Dorsolateral prefrontal cortex (tissue), 120 donors: ENCODE measurements at regions of chr20 and their contacts with region 1.

Region 1: DNA sequence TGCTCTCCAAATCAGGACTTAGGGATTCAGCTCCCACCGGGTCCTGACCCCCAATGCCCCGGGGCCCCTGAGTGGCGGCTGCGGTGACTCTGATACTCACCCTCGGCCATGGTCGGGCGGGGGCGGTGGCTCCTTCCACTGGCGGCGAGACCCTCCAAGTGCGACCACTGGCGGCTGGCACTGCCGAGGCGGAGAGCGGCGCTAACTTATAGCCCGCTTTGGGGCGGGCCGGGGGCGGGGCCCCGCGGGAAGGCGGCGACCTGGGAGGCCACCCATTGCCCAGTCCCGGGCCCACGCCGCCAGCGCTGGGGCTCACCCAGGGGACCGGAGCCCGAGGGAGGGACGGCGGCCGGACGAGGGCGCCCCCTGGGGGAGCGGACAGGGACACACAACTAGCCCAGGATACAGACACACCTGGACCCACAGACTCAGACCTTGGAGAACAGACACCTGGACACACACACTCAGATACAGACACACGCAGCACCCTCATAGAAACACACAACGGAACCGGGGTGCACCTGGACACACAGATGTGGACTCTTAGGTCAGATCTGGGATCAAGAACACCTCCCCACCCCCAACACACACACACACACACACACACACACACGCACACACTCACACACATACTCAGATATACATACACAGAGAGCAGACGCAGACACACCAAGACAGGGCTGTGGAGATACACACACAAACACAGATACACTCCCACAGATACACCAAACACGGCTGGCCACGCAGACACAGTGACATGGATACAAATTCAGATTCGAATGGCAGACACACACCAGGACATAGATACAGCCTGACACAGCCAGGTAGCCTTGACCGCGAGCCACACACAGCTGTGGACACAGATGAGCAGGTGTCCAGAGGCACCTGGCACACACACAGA is at the start of gene TGM2:
- DNase-seq: peak in 1 of 10 donors; percentile 63
- H3K4me3 ChIP-seq: peak within 1 kb of the TSS in 58 of 59 donors; percentile 16 to 65 (median 45)
- H3K27ac ChIP-seq: peak within 1 kb of the TSS in 22 of 59 donors; percentile 1 to 76 (median 30)
- H3K27me3 ChIP-seq: peaks cover 0 to 7% (median 0%) of the 10 kb centered on the region in 45 donors
- CTCF ChIP-seq: peak; percentile 43 to 87 (median 75)
- total RNA-seq, gene TGM2: 17.7 to 220 (median 53.6) TPM

Region 2: DNA sequence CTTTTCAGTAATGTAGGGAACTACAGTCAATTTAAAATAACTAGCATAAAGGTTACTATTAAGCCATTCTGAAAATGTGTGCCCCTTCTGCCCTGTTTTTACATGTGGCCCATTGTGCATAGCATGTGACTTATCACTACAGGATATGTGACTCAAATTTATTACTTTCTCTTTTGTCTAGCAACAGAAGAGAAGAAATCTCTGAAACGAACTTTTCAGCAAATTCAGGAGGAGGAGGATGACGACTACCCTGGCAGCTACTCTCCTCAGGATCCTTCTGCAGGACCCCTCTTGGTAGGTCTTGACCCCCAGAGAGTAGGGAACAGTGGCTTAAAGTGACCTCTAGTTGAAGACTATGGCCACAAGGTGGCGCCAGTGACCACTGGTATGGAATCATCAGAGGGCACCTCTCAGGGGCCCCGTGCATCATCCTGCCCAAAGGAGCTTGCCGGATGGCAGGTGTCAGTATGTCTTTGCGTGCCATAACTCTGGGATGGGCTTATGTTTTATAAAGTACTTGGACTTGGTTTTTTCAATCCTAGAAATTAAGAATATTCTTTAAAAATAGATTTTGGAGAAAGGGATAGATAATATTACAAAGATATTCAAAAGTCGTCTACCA is 107.9 kb before region 1 on chr20:
- intact Hi-C with region 1: loop called in 1 of 2 experiments (anchors 5 kb)
- DNase-seq: peak; percentile 69 to 90 (median 81)
- H3K4me3 ChIP-seq: no peak overlapping the region
- H3K27ac ChIP-seq: peak overlapping the region in 1 of 59 donors; percentile 29
- H3K27me3 ChIP-seq: no peaks in the 10 kb centered on the region
- CTCF ChIP-seq: peak; percentile 79 to 99 (median 93)